Esophagus squamous epithelium (tissue), 5 donors: ENCODE measurements at regions of chr15 and their contacts with region 1.

Region 1: GRCh38 chr15:89177633-89178306 is 43.6 kb downstream of the RLBP1 start:
- DNase-seq: no peak
- H3K4me3 ChIP-seq: no peak overlapping the region
- H3K27ac ChIP-seq: peak overlapping the region in 1 of 4 donors; percentile 1
- H3K4me1 ChIP-seq: peaks cover 0 to 21% (median 3%) of the 10 kb centered on the region in 3 donors
- H3K27me3 ChIP-seq: no peaks in the 10 kb centered on the region
- CTCF ChIP-seq: peak; percentile 29 to 89 (median 82)
- POLR2A ChIP-seq: no peak

Region 2: DNA sequence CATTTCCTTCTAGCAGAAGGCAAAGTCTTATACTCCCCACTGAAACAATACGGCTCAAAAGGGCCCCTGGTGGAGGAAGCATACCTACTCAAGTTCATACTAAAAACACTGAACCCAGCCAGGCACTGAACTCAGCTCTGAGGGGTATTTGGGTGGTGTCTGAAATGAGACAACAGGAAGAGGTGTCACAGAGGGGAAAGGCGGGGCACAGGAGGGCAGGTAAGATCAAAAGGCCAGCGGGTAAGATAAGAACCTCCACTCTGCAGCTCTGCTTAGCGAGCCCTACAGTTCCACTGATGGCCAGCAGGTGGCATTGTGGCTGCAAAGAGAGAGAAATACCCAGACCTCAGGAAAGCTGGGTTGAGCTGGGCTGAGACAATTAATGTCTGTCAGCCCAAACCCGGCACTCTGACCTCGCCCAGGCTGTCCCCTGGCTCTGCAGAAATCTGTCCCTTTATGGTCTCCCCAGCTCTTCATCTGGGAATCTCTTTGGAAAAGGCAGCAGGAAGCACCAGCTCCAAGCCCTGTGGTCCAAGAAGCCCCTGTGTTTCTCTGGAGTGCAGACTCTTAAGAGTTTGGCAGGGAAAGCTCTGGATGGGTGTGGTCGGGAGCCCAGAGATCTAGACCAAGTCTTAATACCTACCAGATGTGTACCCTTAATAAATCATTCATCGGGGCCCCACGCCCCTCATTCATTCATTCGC is 273.0 kb before region 1 on chr15:
- intact Hi-C with region 1: loop called (anchors 10 kb)
- DNase-seq: peak; percentile 19
- H3K4me3 ChIP-seq: no peak overlapping the region
- H3K27ac ChIP-seq: peak overlapping the region in 3 of 4 donors; percentile 33 to 48 (median 39)
- H3K4me1 ChIP-seq: peaks cover 3 to 41% (median 24%) of the 10 kb centered on the region in 3 donors
- H3K27me3 ChIP-seq: no peaks in the 10 kb centered on the region
- CTCF ChIP-seq: peak; percentile 97 to 99 (median 98)
- POLR2A ChIP-seq: no peak

Region 3: DNA sequence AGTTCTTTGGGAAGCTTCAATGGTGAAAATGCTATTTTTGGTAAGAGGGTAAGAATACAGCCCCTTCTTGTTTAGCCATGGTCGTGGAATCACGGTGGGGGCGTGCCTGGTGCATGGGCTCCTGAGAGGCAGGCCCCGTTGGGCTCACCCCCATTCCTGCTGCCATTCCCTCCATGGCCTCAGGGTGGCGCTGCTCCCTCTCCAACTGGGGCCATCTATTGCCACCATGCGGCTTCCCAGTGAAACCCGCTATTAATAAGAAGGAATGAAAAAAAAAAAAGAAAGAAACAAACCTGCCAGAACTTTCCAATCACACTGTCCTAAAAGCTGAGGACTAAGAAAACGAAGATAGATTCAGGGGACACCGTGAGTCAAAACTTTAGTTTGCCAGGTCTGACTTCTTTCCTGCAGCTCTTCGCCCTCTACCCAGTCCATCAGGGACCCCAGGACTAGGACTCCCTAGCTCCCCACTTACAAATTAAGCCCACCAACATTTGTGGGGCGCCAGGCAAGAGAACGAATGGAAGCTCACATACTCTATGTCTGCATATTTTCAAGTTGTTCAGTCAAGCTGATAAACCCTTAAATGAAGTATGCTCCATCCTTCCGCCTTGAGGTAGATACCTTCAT is 120.2 kb before region 1 on chr15:
- intact Hi-C with region 1: loop called (anchors 2 kb)
- DNase-seq: peak; percentile 6
- H3K4me3 ChIP-seq: no peak overlapping the region
- H3K27ac ChIP-seq: peak overlapping the region in 1 of 4 donors; percentile 14
- H3K4me1 ChIP-seq: peaks cover 0 to 22% (median 7%) of the 10 kb centered on the region in 3 donors
- H3K27me3 ChIP-seq: no peaks in the 10 kb centered on the region
- CTCF ChIP-seq: peak; percentile 94 to 99 (median 98)
- POLR2A ChIP-seq: no peak

Region 4: DNA sequence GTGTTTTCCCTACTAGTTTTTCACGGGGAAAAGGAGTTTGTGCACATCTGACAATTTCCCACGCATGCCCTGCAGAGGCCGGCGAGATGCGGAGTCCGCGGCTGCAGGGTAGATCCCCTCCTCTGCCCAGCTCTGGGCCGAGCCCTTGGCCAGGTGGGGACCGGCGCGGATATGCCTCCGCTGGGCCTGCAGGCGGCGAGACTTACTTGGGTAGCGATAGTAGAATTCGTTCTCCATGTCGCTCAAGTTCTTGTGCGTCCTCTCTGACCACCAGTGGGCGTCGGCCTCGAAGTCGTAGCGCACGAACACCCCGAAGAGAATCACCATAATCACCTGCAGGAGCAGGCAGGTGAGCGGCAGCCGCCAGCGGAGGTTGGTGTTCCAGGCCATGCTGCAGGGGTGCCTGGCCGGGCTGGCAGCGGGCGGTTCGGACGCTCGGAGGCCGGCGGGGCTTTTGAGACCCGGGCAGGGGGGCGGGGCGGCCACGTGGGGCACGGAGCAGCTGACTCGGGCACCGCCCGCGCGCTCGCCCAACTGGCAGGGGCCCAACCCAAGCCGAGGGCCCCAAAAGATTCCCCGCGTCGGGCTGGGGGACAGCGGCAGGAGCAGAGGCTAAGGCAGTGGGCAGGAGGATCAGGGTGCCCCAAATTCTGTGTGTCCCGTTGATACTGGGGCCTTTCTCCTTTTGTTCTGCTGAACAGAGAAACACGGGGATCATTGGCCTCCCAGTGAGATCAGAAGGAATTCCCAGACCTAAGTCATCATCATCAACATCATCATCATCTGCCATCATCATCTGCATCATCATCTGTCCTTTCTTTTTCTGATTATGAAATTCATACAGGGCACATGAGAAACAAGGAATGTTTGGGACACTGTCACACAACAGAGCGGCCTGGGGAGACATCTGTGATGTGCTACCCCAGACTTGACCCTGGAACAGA is 318.7 kb after region 1 on chr15 and contains the start of gene RHCG:
- intact Hi-C with region 1: no loop called
- DNase-seq: no peak
- H3K4me3 ChIP-seq: peak within 1 kb of the TSS; percentile 42 to 64 (median 59)
- H3K27ac ChIP-seq: peak within 1 kb of the TSS; percentile 79 to 93 (median 88)
- H3K4me1 ChIP-seq: peaks cover 15 to 68% (median 22%) of the 10 kb centered on the region in 3 donors
- H3K27me3 ChIP-seq: peaks cover 0 to 87% (median 0%) of the 10 kb centered on the region in 4 donors
- CTCF ChIP-seq: peak in 4 of 6 experiments; percentile 16 to 51 (median 38)
- POLR2A ChIP-seq: peak in 2 of 4 donors; percentile 19 to 36
- total RNA-seq, gene RHCG: 2,342 to 7,076 (median 3,336) TPM